Posterior vena cava (tissue), 2 donors: ENCODE measurements at regions of chr11 and their contacts with region 1.

Region 1: GRCh38 chr11:121534131-121535093 is 81.6 kb upstream of the SORL1-AS1 start:
- DNase-seq: no peak

Region 2: GRCh38 chr11:121318848-121319834 is 215.3 kb before region 1 on chr11:
- intact Hi-C with region 1: loop called (anchors 5 kb)
- DNase-seq: no peak

Region 3: GRCh38 chr11:121446752-121447156 is 87.7 kb before region 1 on chr11:
- intact Hi-C with region 1: loop called (anchors 5 kb)
- DNase-seq: no peak

Region 4: GRCh38 chr11:121451986-121452608 is 82.3 kb before region 1 on chr11 and contains the start of gene SORL1:
- intact Hi-C with region 1: loop called (anchors 5 kb)
- DNase-seq: peak; percentile 89
- total RNA-seq, gene SORL1: 9.4 to 15.7 TPM